ENCODE measurements at regions of chr3 and their contacts with region 1.

Region 1: GRCh38 chr3:44648564-44649229 is at the start of gene ZNF35:
- DNase-seq: peak; percentile 89
- H3K4me3 Mint-ChIP-seq: peak within 1 kb of the TSS; percentile 91
- H3K27ac Mint-ChIP-seq: peak within 1 kb of the TSS; percentile 87
- H3K4me1 Mint-ChIP-seq: peaks cover 10% of the 10 kb centered on the region
- H3K27me3 Mint-ChIP-seq: no peaks in the 10 kb centered on the region
- CTCF ChIP-seq: no peak
- total RNA-seq, gene ZNF35: 9.9 and 12.7 TPM in 2 replicates

Region 2: DNA sequence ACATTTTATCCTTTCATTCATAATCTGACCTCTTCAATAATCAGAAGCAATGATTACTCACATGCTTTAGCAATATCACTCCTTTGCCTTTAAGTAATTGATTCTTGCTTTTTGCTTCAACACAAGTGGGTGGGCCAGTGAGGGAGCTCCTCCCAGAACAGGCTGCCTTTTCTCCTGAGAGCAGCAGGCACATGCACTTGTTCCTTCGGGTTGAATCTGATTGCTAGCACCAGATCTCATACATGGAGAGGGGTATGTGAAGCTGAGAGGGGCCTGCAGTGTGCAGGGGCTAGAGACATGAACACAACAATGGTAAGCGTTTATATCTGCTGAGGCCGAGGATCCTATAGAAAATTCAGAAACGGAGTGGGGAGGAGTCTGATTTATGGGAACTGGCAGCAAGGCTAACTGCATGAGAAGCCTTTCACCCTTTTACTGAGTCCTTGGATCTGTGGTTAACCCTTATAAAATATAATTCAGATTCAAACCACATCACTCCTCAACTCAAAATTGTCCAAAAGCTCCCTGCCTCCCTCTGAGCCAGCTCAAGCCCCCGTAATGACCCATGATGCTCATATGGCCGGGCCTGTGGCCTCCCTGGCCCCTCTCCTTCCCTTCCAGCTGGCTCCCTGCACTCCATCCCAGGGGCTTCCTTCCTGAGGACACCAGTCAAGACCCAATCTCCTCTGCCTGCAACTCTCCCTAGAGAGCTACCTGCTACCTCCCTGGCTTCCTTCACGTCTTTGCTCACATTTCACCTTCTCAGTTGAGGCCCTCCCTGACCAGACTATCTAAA is 203.6 kb before region 1 on chr3:
- CTCF ChIA-PET with region 1: no interaction called
- POLR2A ChIA-PET with region 1: no interaction called
- intact Hi-C with region 1: no loop called
- DNase-seq: no peak
- H3K4me3 Mint-ChIP-seq: no peak overlapping the region
- H3K27ac Mint-ChIP-seq: no peak overlapping the region
- H3K4me1 Mint-ChIP-seq: no peaks in the 10 kb centered on the region
- H3K27me3 Mint-ChIP-seq: no peaks in the 10 kb centered on the region
- CTCF ChIP-seq: no peak

Region 3: GRCh38 chr3:44661189-44661588 is 12.5 kb after region 1 on chr3:
- CTCF ChIA-PET with region 1: interaction called, 7 read pairs
- POLR2A ChIA-PET with region 1: interaction called, 12 read pairs
- intact Hi-C with region 1: no loop called
- DNase-seq: no peak
- H3K4me3 Mint-ChIP-seq: no peak overlapping the region
- H3K27ac Mint-ChIP-seq: no peak overlapping the region
- H3K4me1 Mint-ChIP-seq: no peaks in the 10 kb centered on the region
- H3K27me3 Mint-ChIP-seq: no peaks in the 10 kb centered on the region
- CTCF ChIP-seq: peak; percentile 21

Region 4: DNA sequence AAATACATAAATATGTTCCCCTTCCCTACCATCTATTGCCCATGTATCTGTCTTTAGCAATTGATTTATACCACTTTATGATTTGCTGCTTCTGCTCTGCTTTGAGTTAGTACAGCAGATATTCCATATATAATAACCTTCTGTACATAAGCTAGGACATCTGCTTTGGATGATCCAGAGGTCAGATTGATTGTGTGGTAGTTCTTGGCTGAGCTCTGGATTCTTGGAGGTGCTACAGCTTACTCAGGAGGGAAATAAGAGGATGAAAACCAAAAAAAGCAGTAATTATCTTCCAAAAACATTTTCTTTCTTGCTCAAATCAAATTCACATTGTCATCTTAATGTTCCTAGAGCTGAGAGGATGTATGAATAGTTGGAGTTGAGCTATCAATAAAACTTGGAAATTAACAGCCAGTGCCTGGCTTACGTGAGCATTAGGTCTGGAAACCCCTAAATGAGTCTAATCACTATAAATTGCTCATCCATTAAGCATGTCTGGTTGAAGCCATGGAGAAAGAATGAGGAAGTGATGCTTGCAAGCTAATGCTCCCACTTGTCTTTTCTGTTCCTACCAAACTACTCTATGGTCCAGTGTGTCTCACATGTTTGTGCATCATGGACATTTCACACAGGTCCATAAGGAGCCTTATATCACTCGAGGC is 176.7 kb after region 1 on chr3:
- CTCF ChIA-PET with region 1: no interaction called
- POLR2A ChIA-PET with region 1: no interaction called
- intact Hi-C with region 1: no loop called
- DNase-seq: no peak
- H3K4me3 Mint-ChIP-seq: no peak overlapping the region
- H3K27ac Mint-ChIP-seq: no peak overlapping the region
- H3K4me1 Mint-ChIP-seq: no peaks in the 10 kb centered on the region
- H3K27me3 Mint-ChIP-seq: no peaks in the 10 kb centered on the region
- CTCF ChIP-seq: no peak

Measured in MCF 10A (cell line).